Panc1 (cell line): ENCODE measurements at regions of chr10 and their contacts with region 1.

Region 1: DNA sequence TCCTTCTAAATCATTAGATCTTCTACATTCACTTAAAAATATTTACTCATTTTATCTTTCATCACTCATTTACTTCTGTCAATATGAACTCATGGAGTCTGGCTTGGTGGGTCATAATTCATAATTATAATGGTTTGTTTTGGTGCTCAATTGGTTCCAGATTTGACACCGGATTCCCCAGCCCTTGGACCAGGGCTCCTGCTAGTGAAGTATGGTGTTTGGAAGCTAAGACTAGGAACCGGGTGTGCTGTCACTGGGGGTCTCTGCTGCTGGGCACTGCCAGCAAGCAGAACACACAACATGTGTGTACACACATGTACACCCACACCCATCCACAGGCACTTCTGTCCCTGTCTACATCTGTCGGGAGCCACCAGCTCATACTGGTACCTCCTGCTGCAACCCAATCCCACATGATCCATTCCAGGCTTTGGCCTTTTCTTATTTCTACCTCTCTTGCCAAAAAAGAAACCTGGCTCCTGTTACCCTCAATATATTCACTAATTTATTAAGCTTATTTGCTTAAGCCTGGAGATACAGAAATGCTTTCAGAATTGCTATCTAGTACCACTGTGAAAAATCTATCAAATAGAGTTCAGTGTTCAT is 246.1 kb downstream of the DIP2C start:
- DNase-seq: no peak
- ATAC-seq: no peak
- H3K4me3 ChIP-seq: no peak overlapping the region
- H3K27ac ChIP-seq: no peak overlapping the region
- H3K4me1 ChIP-seq: no peaks in the 10 kb centered on the region
- H3K27me3 ChIP-seq: no peaks in the 10 kb centered on the region
- CTCF ChIP-seq: no peak

Region 2: DNA sequence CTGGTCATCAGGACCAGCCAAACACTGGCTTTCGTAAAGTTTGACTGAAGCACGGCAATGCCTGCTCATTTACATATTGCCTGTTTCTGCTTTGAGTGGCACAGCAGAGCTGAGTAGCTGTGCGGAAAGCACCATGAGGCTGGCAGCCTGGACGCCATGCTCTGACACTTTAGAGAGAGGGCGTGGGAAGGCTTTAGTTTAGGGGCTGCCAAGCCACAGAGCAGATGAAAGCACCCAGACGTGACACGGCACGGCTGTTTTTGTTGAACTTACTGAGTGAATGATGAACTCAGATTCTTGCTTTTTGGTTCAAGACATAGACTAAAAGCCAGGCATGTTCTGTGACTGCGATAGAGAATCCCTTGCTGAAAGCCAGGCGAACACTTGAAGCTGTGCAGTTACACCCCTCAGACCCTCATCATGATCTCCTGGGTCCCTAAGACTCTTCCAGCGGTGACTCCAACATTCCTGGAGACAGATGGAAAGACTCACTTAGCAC is 126.0 kb before region 1 on chr10:
- CTCF ChIA-PET with region 1: no interaction called
- POLR2A ChIA-PET with region 1: no interaction called
- in situ Hi-C with region 1: no loop called
- intact Hi-C with region 1: no loop called
- DNase-seq: no peak
- ATAC-seq: no peak
- H3K4me3 ChIP-seq: no peak overlapping the region
- H3K27ac ChIP-seq: no peak overlapping the region
- H3K4me1 ChIP-seq: no peaks in the 10 kb centered on the region
- H3K27me3 ChIP-seq: no peaks in the 10 kb centered on the region
- CTCF ChIP-seq: no peak

Region 3: GRCh38 chr10:361203-362081 is 81.9 kb before region 1 on chr10:
- CTCF ChIA-PET with region 1: no interaction called
- POLR2A ChIA-PET with region 1: no interaction called
- in situ Hi-C with region 1: no loop called
- intact Hi-C with region 1: no loop called
- DNase-seq: no peak
- ATAC-seq: no peak
- H3K4me3 ChIP-seq: no peak overlapping the region
- H3K27ac ChIP-seq: no peak overlapping the region
- H3K4me1 ChIP-seq: no peaks in the 10 kb centered on the region
- H3K27me3 ChIP-seq: no peaks in the 10 kb centered on the region
- CTCF ChIP-seq: no peak

Region 4: GRCh38 chr10:420154-421121 is 22.9 kb before region 1 on chr10:
- CTCF ChIA-PET with region 1: interaction called, 12 read pairs
- POLR2A ChIA-PET with region 1: no interaction called
- in situ Hi-C with region 1: no loop called
- intact Hi-C with region 1: no loop called
- DNase-seq: no peak
- ATAC-seq: no peak
- H3K4me3 ChIP-seq: no peak overlapping the region
- H3K27ac ChIP-seq: no peak overlapping the region
- H3K4me1 ChIP-seq: no peaks in the 10 kb centered on the region
- H3K27me3 ChIP-seq: no peaks in the 10 kb centered on the region
- CTCF ChIP-seq: no peak

Region 5: DNA sequence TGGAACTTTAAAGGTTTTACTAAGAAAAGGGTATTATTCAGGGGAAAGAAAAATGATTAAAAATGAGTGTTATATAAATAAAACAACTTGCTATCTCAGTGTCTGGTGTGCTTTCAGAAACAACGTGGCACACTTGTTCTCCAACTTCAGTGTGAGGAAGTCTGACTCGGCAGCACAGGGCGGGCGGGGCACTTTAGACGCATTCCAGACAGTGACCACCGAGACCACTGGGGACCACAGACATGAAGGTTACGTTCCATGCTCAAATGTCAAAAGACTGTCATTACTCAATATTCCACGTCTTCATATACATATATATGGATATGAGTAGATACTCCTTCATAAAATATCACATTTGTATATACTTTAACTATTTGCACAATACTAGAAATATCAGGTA is 401.2 kb after region 1 on chr10:
- CTCF ChIA-PET with region 1: no interaction called
- POLR2A ChIA-PET with region 1: no interaction called
- in situ Hi-C with region 1: no loop called
- intact Hi-C with region 1: no loop called
- DNase-seq: no peak
- ATAC-seq: no peak
- H3K4me3 ChIP-seq: no peak overlapping the region
- H3K27ac ChIP-seq: no peak overlapping the region
- H3K4me1 ChIP-seq: no peaks in the 10 kb centered on the region
- H3K27me3 ChIP-seq: no peaks in the 10 kb centered on the region
- CTCF ChIP-seq: no peak